Activated CD4-positive, alpha-beta memory T cell treated with anti-CD3 and anti-CD28 coated beads for 36 hours (primary cell): ENCODE measurements at regions of chr3 and their contacts with region 1.

Region 1: DNA sequence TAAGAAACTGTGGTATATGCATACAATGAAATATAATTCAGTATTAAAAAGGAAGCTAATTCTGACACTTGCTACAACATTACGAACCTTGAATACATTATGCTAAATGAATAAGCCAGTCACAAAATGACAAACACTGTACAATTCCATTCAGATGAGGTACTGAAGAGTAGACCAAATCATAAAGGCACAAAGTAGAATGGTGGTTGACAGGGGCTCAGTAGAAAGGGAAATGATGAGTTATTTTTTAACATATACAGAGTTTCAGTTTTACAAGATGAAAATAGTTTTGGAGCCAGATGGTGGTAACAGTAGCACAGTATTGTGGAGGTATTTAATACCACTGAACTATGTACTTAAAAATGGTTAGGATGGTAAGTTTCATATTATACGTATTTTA is 254.6 kb upstream of the RBMS3 start:
- DNase-seq: no peak
- H3K4me3 Mint-ChIP-seq: no peak overlapping the region
- H3K27ac Mint-ChIP-seq: no peak overlapping the region
- H3K4me1 Mint-ChIP-seq: no peaks in the 10 kb centered on the region
- H3K27me3 Mint-ChIP-seq: no peaks in the 10 kb centered on the region

Region 2: GRCh38 chr3:28042095-28042635 is 984.1 kb before region 1 on chr3:
- CTCF ChIA-PET with region 1: no interaction called
- POLR2A ChIA-PET with region 1: no interaction called
- intact Hi-C with region 1: no loop called
- DNase-seq: no peak
- H3K4me3 Mint-ChIP-seq: no peak overlapping the region
- H3K27ac Mint-ChIP-seq: no peak overlapping the region
- H3K4me1 Mint-ChIP-seq: no peaks in the 10 kb centered on the region
- H3K27me3 Mint-ChIP-seq: peaks cover 4% of the 10 kb centered on the region

Region 3: GRCh38 chr3:28840976-28841376 is 185.3 kb before region 1 on chr3:
- CTCF ChIA-PET with region 1: no interaction called
- POLR2A ChIA-PET with region 1: no interaction called
- intact Hi-C with region 1: loop called (anchors 1 kb)
- DNase-seq: peak; percentile 65
- H3K4me3 Mint-ChIP-seq: no peak overlapping the region
- H3K27ac Mint-ChIP-seq: peak overlapping the region; percentile 56
- H3K4me1 Mint-ChIP-seq: peaks cover 6% of the 10 kb centered on the region
- H3K27me3 Mint-ChIP-seq: peaks cover 2% of the 10 kb centered on the region

Region 4: GRCh38 chr3:28935146-28935545 is 91.1 kb before region 1 on chr3:
- CTCF ChIA-PET with region 1: no interaction called
- POLR2A ChIA-PET with region 1: no interaction called
- intact Hi-C with region 1: loop called (anchors 2 kb)
- DNase-seq: no peak
- H3K4me3 Mint-ChIP-seq: no peak overlapping the region
- H3K27ac Mint-ChIP-seq: no peak overlapping the region
- H3K4me1 Mint-ChIP-seq: peaks cover 11% of the 10 kb centered on the region
- H3K27me3 Mint-ChIP-seq: no peaks in the 10 kb centered on the region

Region 5: GRCh38 chr3:29091599-29092189 is 65.4 kb after region 1 on chr3:
- CTCF ChIA-PET with region 1: no interaction called
- POLR2A ChIA-PET with region 1: no interaction called
- intact Hi-C with region 1: loop called (anchors 2 kb)
- DNase-seq: no peak
- H3K4me3 Mint-ChIP-seq: no peak overlapping the region
- H3K27ac Mint-ChIP-seq: no peak overlapping the region
- H3K4me1 Mint-ChIP-seq: no peaks in the 10 kb centered on the region
- H3K27me3 Mint-ChIP-seq: no peaks in the 10 kb centered on the region

Region 6: DNA sequence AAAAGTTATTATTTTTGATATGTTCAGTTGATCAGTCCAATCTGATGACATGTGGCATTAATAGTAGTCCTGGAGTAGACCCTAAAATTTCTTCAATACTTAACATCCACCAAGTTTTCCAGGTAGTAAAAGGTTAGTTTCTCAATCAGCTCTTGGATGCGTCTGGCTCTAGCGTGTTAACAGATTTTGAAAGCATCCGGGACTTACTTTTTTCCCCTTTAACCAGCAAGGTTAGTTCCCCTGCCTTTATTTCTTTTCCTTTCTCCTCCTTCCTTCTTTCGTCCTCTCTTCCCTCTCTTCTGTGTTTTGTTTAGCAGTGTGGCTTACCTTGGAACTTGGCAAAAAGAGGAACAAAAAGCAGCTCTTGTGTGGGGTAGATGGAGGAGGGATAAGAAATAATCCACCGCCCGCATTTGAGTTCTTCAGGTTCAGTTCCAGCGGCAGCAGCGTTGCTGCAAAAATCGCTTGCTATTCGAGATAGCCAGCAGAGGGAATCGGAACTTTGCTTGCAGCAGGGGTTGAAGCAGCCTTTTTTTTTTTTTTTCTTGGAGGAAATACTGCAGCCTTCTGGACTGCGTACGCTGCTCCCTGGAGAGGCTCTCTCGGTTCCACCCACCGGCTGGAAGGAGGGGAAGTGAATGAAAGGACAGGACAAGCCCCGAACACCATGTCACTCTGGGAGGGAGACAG is 254.3 kb after region 1 on chr3 and contains the start of gene RBMS3:
- CTCF ChIA-PET with region 1: no interaction called
- POLR2A ChIA-PET with region 1: no interaction called
- intact Hi-C with region 1: loop called (anchors 2 kb)
- DNase-seq: peak; percentile 17
- H3K4me3 Mint-ChIP-seq: peak within 1 kb of the TSS; percentile 64
- H3K27ac Mint-ChIP-seq: peak within 1 kb of the TSS; percentile 57
- H3K4me1 Mint-ChIP-seq: peaks cover 24% of the 10 kb centered on the region
- H3K27me3 Mint-ChIP-seq: peaks cover 13% of the 10 kb centered on the region
- total RNA-seq, gene RBMS3: 1.6 TPM